Adrenal gland (tissue), 19 donors: ENCODE measurements at regions of chr17 and their contacts with region 1.

Region 1: DNA sequence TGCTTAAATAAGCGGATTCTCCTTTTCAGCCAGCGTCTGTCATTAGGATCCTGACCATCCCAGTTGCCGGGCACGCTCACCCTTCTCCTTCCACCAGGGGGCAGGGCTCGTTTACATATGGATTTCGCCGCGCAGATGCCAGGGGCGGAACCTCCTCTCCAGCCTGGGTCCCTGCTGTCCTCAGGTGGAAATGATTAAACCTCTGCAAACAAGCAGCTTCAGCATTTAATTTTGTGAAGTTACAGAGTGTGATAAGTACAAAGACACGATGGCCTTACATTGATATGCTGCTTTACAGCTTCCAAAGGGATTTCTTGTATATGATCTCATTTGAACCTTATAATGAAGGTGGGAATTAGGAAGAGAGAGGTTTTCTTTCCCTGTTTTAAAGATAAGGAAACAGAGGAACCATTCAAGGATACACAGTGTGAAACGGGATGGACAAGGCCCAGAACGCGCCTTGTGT is 3.9 kb upstream of the KRT28 start:
- DNase-seq: peak; percentile 66 to 88 (median 77)
- H3K4me3 ChIP-seq: no peak overlapping the region
- H3K27ac ChIP-seq: no peak overlapping the region
- H3K4me1 ChIP-seq: no peaks in the 10 kb centered on the region
- H3K27me3 ChIP-seq: peaks cover 55% of the 10 kb centered on the region
- CTCF ChIP-seq: peak; percentile 70 to 82 (median 78)
- POLR2A ChIP-seq: no peak

Region 2: GRCh38 chr17:40854159-40854814 is 50.6 kb after region 1 on chr17:
- intact Hi-C with region 1: no loop called
- DNase-seq: peak in 1 of 7 donors; percentile 5
- H3K4me3 ChIP-seq: no peak overlapping the region
- H3K27ac ChIP-seq: no peak overlapping the region
- H3K4me1 ChIP-seq: peaks cover 0 to 5% of the 10 kb centered on the region in 2 donors
- H3K27me3 ChIP-seq: no peaks in the 10 kb centered on the region
- CTCF ChIP-seq: no peak
- POLR2A ChIP-seq: no peak

Region 3: GRCh38 chr17:40884708-40885512 is 81.3 kb after region 1 on chr17 and contains the start of gene KRT20:
- intact Hi-C with region 1: no loop called
- DNase-seq: no peak
- H3K4me3 ChIP-seq: no peak within 1 kb of the TSS
- H3K27ac ChIP-seq: no peak within 1 kb of the TSS
- H3K4me1 ChIP-seq: no peaks in the 10 kb centered on the region
- H3K27me3 ChIP-seq: peaks cover 15% of the 10 kb centered on the region
- CTCF ChIP-seq: no peak
- POLR2A ChIP-seq: no peak
- total RNA-seq, gene KRT20: 0.23 to 0.50 TPM in 2 of 9 donors, not detected in the others

Region 4: DNA sequence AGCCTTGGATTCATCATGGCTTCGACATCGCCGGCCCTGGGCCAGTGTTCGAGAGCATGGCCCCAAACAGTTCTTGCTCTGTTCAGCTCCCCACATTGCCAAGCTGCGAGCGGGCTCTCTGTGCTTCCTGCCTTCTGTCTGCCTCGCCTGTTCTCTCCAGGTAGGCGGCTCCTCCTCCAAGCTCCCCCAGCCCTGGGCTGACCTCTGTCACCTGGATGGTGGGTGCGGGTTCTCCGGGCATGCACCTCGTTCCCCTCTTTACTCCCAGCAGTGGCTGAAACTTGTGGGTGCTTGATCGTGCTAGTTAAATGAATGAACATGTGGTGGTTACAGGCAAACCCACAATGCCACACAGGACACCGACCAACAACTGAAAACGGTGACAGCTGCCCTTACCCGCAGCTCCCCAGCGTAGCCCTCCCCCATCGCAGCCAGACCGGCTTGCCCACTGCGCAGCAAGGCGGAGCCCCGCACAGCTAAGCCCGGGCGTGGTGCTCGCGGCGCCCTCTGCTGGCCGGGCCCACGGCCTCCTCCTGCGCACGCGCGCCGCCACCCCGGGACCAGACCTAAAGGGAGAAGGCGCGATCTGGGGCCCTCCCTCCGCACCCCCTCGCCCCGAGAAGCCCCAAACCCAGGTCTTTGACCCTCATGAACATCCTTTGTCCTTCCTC is 862.1 kb after region 1 on chr17:
- intact Hi-C with region 1: loop called in 1 of 2 experiments (anchors 5 kb)
- DNase-seq: peak; percentile 86 to 91 (median 88)
- H3K4me3 ChIP-seq: peak overlapping the region in 2 of 4 donors; percentile 37 to 52
- H3K27ac ChIP-seq: peak overlapping the region; percentile 31 to 89 (median 68)
- H3K4me1 ChIP-seq: peaks cover 13 to 18% of the 10 kb centered on the region in 2 donors
- H3K27me3 ChIP-seq: no peaks in the 10 kb centered on the region
- CTCF ChIP-seq: peak; percentile 75 to 94 (median 88)
- POLR2A ChIP-seq: peak; percentile 29 to 69